ENCODE measurements at regions of chr14 and their contacts with region 1.

Region 1: DNA sequence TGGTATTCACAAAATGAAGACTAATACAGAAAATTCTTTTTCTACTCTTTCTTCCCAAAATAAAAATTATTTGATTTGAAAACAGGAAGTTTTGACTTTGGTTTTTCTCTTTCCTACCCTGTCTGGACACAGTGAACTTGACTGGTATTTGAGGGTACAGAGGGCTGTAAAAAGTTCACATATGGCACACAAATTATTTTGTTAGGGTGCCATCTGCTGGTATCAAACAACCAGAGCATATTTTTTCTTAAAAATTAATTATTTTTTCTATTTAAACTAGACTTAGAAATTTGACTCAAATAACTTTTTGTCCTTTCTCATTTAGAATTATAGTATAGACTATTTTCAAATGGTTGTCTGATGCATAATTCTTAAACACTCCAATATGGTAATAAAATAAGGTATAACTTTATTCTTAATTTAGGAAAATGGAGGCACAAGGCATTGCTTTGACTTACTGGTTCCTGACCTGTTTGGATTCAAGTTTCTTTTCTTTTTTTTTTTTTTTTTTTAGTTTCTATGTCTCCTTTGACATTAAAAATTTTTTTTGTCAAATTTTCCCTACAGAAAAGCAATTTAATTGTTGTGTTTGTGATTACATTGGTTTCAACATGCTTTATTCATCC is 390.6 kb downstream of the PRKD1 start:
- DNase-seq: no peak
- H3K4me3 ChIP-seq: no peak overlapping the region
- H3K27ac ChIP-seq: no peak overlapping the region
- H3K4me1 ChIP-seq: no peaks in the 10 kb centered on the region
- H3K27me3 ChIP-seq: peaks cover 18% of the 10 kb centered on the region
- CTCF ChIP-seq: peak; percentile 32

Region 2: DNA sequence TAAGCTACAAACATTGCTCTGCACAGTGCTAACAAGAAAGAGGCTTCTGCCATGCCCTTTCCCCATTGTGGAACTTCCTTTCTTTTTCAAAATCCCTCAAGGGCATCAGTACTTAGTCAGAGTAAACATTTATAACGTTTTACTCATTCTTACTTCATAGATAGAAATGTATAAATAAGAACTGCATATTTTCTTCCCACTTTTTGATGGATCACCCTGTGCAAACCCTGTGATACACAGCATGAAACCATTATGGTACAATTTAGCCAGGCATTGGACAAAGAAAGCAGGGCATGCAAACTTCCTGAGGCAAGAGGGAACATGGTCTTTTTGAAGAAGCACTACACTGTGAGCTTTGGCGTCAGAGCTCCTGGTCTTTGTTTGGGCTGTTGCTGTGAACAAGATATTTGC is 884.2 kb before region 1 on chr14:
- intact Hi-C with region 1: no loop called
- DNase-seq: no peak
- H3K4me3 ChIP-seq: no peak overlapping the region
- H3K27ac ChIP-seq: no peak overlapping the region
- H3K4me1 ChIP-seq: no peaks in the 10 kb centered on the region
- H3K27me3 ChIP-seq: no peaks in the 10 kb centered on the region
- CTCF ChIP-seq: no peak

Region 3: GRCh38 chr14:28751467-28752058 is 785.4 kb before region 1 on chr14:
- intact Hi-C with region 1: loop called (anchors 10 kb)
- DNase-seq: no peak
- H3K4me3 ChIP-seq: no peak overlapping the region
- H3K27ac ChIP-seq: no peak overlapping the region
- H3K4me1 ChIP-seq: no peaks in the 10 kb centered on the region
- H3K27me3 ChIP-seq: peaks cover 75% of the 10 kb centered on the region
- CTCF ChIP-seq: peak; percentile 50

Region 4: DNA sequence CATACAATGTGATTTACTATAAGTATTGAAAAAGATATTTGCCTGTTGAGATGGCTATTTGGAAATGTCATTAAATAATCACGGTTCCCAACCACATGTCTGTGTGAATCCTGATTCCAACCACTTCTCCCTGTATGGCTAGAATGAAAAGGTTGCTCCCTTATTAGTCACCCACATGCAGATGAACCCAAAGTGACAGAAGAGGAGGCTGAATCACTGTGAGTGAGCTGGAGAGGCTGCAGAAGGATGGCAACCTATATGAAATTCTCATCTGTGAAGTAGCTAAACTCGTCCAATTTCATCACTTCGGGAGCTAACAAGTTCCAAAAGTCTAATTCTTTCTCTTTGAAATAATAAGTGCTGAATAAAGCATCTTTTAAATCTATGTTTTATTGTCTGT is 90.1 kb after region 1 on chr14:
- intact Hi-C with region 1: no loop called
- DNase-seq: no peak
- H3K4me3 ChIP-seq: no peak overlapping the region
- H3K27ac ChIP-seq: no peak overlapping the region
- H3K4me1 ChIP-seq: no peaks in the 10 kb centered on the region
- H3K27me3 ChIP-seq: no peaks in the 10 kb centered on the region
- CTCF ChIP-seq: no peak

Region 5: DNA sequence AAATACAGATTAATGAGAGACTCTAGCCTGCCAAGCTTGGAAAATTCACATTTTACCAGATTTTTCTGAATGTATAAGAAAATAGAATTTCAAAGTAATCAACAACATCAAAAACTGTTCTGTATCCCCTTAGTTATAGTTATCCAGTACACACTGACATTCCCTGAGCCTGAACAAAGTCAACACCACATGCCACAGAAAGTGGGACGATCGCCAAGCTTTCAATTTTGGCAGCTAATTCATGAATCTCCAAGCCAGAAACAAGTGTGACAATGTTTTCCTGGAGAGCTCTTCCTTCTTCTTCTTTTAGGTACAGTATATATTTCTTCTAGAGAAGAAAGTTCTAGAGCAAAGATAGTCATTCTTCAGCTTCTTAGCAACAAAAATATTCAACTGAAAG is 100.4 kb after region 1 on chr14:
- intact Hi-C with region 1: no loop called
- DNase-seq: peak; percentile 40
- H3K4me3 ChIP-seq: no peak overlapping the region
- H3K27ac ChIP-seq: no peak overlapping the region
- H3K4me1 ChIP-seq: peaks cover 13% of the 10 kb centered on the region
- H3K27me3 ChIP-seq: no peaks in the 10 kb centered on the region
- CTCF ChIP-seq: no peak

Region 6: DNA sequence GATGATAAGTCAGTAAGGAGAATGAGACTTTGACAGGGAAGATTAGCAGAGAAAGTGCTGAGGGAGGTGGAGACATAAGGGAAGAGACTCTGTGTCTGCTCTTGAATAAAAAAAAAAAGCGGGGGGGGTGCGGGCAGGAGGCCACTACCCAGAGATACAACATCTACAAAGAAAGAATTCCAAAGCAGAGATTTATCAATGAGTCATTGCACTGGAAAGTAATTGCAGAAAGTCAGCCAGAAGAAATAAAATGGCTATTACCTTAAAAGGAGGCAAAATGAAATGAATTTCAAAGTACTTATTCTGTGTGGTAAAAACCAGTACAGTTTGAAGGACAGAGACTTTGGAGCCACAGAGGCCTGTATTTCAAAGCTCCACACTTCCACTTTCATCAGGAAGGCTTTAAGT is 657.7 kb after region 1 on chr14:
- intact Hi-C with region 1: no loop called
- DNase-seq: no peak
- H3K4me3 ChIP-seq: no peak overlapping the region
- H3K27ac ChIP-seq: no peak overlapping the region
- H3K4me1 ChIP-seq: no peaks in the 10 kb centered on the region
- H3K27me3 ChIP-seq: no peaks in the 10 kb centered on the region
- CTCF ChIP-seq: no peak